Activated CD4-positive, alpha-beta T cell treated with anti-CD3 and anti-CD28 coated beads, Interleukin-2, amount 10 ng/mL, durations not matched to agents 24 days and 14 days (primary cell): ENCODE measurements at regions of chr18 and their contacts with region 1.

Region 1: GRCh38 chr18:55234366-55235093 is 275.3 kb upstream of the CCDC68 start:
- DNase-seq: peak; percentile 87
- H3K4me3 Mint-ChIP-seq: no peak overlapping the region
- H3K27ac Mint-ChIP-seq: no peak overlapping the region
- H3K4me1 Mint-ChIP-seq: peaks cover 2% of the 10 kb centered on the region
- H3K27me3 Mint-ChIP-seq: no peaks in the 10 kb centered on the region

Region 2: GRCh38 chr18:55275039-55275901 is 40.7 kb after region 1 on chr18:
- intact Hi-C with region 1: loop called (anchors 1 kb)
- DNase-seq: no peak
- H3K4me3 Mint-ChIP-seq: no peak overlapping the region
- H3K27ac Mint-ChIP-seq: no peak overlapping the region
- H3K4me1 Mint-ChIP-seq: no peaks in the 10 kb centered on the region
- H3K27me3 Mint-ChIP-seq: no peaks in the 10 kb centered on the region

Region 3: GRCh38 chr18:55522011-55522410 is 287.5 kb after region 1 on chr18:
- intact Hi-C with region 1: no loop called
- DNase-seq: peak; percentile 69
- H3K4me3 Mint-ChIP-seq: no peak overlapping the region
- H3K27ac Mint-ChIP-seq: no peak overlapping the region
- H3K4me1 Mint-ChIP-seq: no peaks in the 10 kb centered on the region
- H3K27me3 Mint-ChIP-seq: no peaks in the 10 kb centered on the region

Region 4: DNA sequence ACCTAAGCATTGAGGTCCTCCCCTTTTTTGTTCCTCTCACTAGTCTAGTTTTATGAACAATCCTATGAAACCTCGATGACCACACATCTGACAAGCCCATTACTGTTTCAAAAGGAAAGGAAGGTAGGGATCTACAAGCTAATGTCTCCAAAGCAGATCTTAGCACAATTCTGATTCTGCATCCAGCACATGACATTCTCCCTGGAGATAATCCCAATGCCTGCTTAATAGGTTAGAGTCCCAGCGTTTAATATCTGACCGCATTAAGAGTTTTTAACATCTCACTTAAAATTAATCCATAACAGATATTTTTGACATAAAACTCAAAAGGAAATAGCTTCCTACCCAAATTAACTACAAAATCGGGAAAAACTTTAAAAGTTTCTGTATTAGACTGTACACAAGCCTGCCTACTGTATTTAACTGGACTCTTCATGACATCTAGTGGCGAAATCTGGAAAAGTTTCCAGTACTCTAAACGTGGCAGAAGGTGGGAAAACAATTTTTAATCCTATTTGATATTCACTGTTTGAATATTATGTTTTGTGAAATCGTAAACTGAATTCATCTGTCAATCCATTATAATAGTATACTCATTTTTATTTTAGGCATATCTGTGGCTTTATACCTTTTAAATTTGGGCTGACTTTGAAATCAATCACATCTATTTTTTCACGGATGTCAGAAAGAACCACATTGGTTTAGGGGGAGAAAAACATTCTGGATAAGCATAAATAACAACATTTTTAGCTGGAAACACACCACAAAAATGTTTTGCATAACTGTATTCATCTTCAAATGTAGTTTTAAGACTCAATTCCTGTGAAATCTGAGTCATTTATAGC is 1341.5 kb after region 1 on chr18:
- intact Hi-C with region 1: loop called (anchors 1 kb)
- DNase-seq: peak; percentile 65
- H3K4me3 Mint-ChIP-seq: no peak overlapping the region
- H3K27ac Mint-ChIP-seq: no peak overlapping the region
- H3K4me1 Mint-ChIP-seq: no peaks in the 10 kb centered on the region
- H3K27me3 Mint-ChIP-seq: peaks cover 7% of the 10 kb centered on the region